Prostate gland (tissue), 2 donors: ENCODE measurements at regions of chr11 and their contacts with region 1.

Region 1: GRCh38 chr11:119373921-119374631 is 7.4 kb downstream of the USP2 start:
- DNase-seq: peak; percentile 55
- H3K4me3 ChIP-seq: no peak overlapping the region
- H3K27ac ChIP-seq: peak overlapping the region; percentile 77 to 80
- H3K4me1 ChIP-seq: peaks cover 12% of the 10 kb centered on the region
- H3K27me3 ChIP-seq: no peaks in the 10 kb centered on the region
- CTCF ChIP-seq: peak; percentile 59 to 89 (median 74)
- POLR2A ChIP-seq: no peak

Region 2: GRCh38 chr11:119315131-119316015 is 58.7 kb before region 1 on chr11:
- intact Hi-C with region 1: loop called (anchors 2 kb)
- DNase-seq: no peak
- H3K4me3 ChIP-seq: peak overlapping the region; percentile 28 to 40
- H3K27ac ChIP-seq: peak overlapping the region; percentile 66 to 72
- H3K4me1 ChIP-seq: no peaks in the 10 kb centered on the region
- H3K27me3 ChIP-seq: peaks cover 3% of the 10 kb centered on the region
- CTCF ChIP-seq: no peak
- POLR2A ChIP-seq: no peak